Panc1 (cell line): ENCODE measurements at regions of chr11 and their contacts with region 1.

Region 1: GRCh38 chr11:125941619-125942611 is 3.9 kb upstream of the VSIG10L2 start:
- DNase-seq: no peak
- ATAC-seq: peak; percentile 88
- H3K4me3 ChIP-seq: no peak overlapping the region
- H3K27ac ChIP-seq: no peak overlapping the region
- H3K4me1 ChIP-seq: no peaks in the 10 kb centered on the region
- H3K27me3 ChIP-seq: no peaks in the 10 kb centered on the region
- CTCF ChIP-seq: peak; percentile 95

Region 2: GRCh38 chr11:125663910-125664309 is 278.0 kb before region 1 on chr11:
- CTCF ChIA-PET with region 1: no interaction called
- POLR2A ChIA-PET with region 1: no interaction called
- in situ Hi-C with region 1: no loop called
- intact Hi-C with region 1: no loop called
- DNase-seq: no peak
- ATAC-seq: no peak
- H3K4me3 ChIP-seq: no peak overlapping the region
- H3K27ac ChIP-seq: no peak overlapping the region
- H3K4me1 ChIP-seq: no peaks in the 10 kb centered on the region
- H3K27me3 ChIP-seq: no peaks in the 10 kb centered on the region
- CTCF ChIP-seq: no peak

Region 3: GRCh38 chr11:126194121-126194543 is 252.2 kb after region 1 on chr11:
- CTCF ChIA-PET with region 1: interaction called, 3 read pairs
- POLR2A ChIA-PET with region 1: no interaction called
- in situ Hi-C with region 1: no loop called
- intact Hi-C with region 1: loop called (anchors 1 kb)
- DNase-seq: no peak
- ATAC-seq: peak; percentile 72
- H3K4me3 ChIP-seq: no peak overlapping the region
- H3K27ac ChIP-seq: no peak overlapping the region
- H3K4me1 ChIP-seq: peaks cover 3% of the 10 kb centered on the region; the same call in 1 of the 2 replicates
- H3K27me3 ChIP-seq: no peaks in the 10 kb centered on the region
- CTCF ChIP-seq: peak; percentile 84

Region 4: GRCh38 chr11:126211235-126212088 is 269.5 kb after region 1 on chr11 and contains the starts of genes FAM118B and RPUSD4:
- CTCF ChIA-PET with region 1: no interaction called
- POLR2A ChIA-PET with region 1: no interaction called
- in situ Hi-C with region 1: loop called (anchors 25 kb)
- intact Hi-C with region 1: no loop called
- DNase-seq: peak; percentile 69
- ATAC-seq: peak; percentile 98
- H3K4me3 ChIP-seq: peak within 1 kb of the TSS; percentile 87 to 99
- H3K27ac ChIP-seq: peak within 1 kb of the TSS; percentile 90
- H3K4me1 ChIP-seq: peaks cover 26% of the 10 kb centered on the region
- H3K27me3 ChIP-seq: no peaks in the 10 kb centered on the region
- CTCF ChIP-seq: no peak
- total RNA-seq, gene FAM118B: 41.6 TPM
- total RNA-seq, gene RPUSD4: 52.3 TPM